AG04450 (cell line): ENCODE measurements at regions of chr5 and their contacts with region 1.

Region 1: DNA sequence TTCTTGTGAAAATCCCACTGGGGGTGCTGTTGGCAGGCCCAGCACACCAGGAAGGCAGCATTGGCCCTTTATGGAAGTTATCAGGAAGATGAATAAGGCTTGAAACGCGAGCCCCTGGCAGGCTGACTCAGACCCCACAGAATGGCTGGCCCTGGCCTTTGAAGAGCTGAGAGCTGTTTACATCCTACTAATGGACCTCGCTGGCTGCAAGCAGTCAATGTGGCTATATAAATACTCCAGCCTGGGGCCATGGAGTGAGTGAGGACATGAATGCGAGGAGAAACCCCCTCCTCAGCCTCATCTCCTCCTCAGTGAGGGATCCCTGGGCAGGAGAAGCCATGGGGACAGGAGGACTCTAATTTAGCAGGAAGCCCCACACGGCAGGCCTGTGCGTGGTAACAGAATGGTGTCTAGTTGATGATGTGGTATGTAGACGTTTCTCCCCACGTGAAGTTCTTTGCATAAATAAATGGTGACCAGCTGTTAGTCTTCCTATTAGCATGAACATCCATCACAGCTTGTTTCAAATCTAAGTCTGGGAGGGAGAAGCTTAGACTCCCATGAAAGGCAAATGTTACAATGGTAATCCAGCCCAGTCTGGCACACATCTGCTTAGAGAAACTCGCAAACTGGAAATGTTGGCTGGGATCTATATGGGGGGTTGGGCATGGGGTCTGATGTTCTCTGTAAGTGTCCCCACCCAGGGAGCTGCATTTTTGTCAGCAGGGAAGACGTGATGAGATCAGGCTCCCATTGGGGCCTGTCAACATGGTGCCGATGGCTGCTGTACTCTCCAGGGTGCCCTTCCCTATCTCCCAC is 175.1 kb upstream of the PITX1 start:
- DNase-seq: peak; percentile 97
- H3K4me3 ChIP-seq: peak overlapping the region; percentile 39
- H3K27ac ChIP-seq: peak overlapping the region; percentile 98
- H3K27me3 ChIP-seq: no peaks in the 10 kb centered on the region
- CTCF ChIP-seq: peak; percentile 49; the same call in 1 of the 2 replicates

Region 2: DNA sequence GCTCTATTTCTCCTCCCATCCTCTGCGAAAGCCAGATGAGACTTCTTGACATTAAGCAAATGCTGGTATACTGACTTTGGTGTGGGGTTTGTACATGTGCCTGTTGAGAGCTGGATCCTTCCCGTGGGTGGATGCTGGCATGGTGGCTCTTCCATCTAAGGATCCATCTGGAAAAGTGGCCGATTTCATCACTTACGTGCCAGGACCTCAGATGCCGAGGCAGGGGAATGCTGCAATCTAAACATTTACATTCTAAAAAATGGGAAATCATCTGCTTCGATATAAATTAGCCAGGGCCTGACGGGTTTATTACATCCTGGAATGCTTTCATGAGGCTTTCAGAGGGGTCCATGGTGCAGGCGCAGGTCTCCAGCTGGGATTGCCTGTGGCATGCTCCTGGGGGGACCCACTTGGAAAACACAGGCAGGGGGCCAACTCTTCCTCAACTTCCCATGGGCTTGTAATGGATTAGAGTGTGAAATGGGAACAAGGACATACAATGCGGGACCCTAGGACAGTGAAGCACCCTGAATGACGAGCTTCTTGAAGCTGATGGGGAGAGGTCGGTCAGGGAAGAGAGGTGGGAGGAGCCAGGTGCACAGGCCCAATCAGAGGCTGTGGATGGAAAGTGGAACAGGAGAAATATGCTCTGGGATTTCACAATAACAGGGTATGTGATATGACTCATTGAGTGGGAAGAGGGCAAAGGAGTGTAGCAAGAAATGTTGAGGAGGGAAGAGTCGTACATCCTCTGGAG is 69.6 kb before region 1 on chr5:
- CTCF ChIA-PET with region 1: interaction called, 3 read pairs
- POLR2A ChIA-PET with region 1: interaction called, 11 read pairs
- DNase-seq: peak; percentile 92
- H3K4me3 ChIP-seq: peak overlapping the region; percentile 43
- H3K27ac ChIP-seq: peak overlapping the region; percentile 97
- H3K27me3 ChIP-seq: no peaks in the 10 kb centered on the region
- CTCF ChIP-seq: no peak

Region 3: GRCh38 chr5:135191084-135191826 is 17.9 kb before region 1 on chr5:
- CTCF ChIA-PET with region 1: interaction called, 10 read pairs
- POLR2A ChIA-PET with region 1: interaction called, 9 read pairs
- DNase-seq: peak; percentile 44
- H3K4me3 ChIP-seq: peak overlapping the region; percentile 49
- H3K27ac ChIP-seq: no peak overlapping the region
- H3K27me3 ChIP-seq: no peaks in the 10 kb centered on the region
- CTCF ChIP-seq: peak; percentile 90

Region 4: GRCh38 chr5:135246923-135247795 is 38.0 kb after region 1 on chr5:
- CTCF ChIA-PET with region 1: interaction called, 4 read pairs
- POLR2A ChIA-PET with region 1: interaction called, 30 read pairs
- DNase-seq: peak; percentile 76
- H3K4me3 ChIP-seq: no peak overlapping the region
- H3K27ac ChIP-seq: peak overlapping the region; percentile 96
- H3K27me3 ChIP-seq: no peaks in the 10 kb centered on the region
- CTCF ChIP-seq: no peak

Region 5: DNA sequence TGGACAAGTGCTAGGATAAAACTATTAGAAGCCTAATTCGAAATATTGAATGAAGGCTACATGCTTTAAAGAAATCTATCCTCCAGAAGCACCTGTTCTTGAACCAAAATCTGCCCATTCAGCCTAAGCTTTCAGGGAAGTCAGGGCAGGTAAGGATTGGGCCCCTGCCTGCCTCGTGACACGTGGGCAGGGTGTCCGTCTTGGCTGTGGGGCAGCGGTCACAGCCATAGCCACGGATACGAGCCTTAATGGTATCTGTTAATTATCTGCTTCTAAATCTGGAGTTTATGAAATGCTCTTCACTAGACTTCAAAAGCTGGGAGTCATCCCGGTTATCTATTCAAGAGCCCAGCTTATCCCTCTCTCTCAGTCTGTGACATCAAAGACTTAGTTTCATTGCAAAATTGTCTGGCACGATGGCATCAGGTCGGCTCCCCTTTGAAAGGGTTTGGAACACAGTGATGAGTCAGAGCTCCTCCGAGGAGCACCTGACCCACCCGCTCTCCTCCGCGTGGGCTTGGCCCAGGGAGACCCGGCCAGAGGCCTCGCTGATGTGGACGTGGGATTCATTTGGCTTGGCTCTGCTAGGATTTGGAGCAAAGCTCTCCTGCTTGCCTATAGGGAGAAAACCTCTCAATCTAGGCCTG is 54.0 kb after region 1 on chr5:
- CTCF ChIA-PET with region 1: interaction called, 6 read pairs
- POLR2A ChIA-PET with region 1: interaction called, 55 read pairs
- DNase-seq: no peak
- H3K4me3 ChIP-seq: no peak overlapping the region
- H3K27ac ChIP-seq: no peak overlapping the region
- H3K27me3 ChIP-seq: no peaks in the 10 kb centered on the region
- CTCF ChIP-seq: no peak

Region 6: DNA sequence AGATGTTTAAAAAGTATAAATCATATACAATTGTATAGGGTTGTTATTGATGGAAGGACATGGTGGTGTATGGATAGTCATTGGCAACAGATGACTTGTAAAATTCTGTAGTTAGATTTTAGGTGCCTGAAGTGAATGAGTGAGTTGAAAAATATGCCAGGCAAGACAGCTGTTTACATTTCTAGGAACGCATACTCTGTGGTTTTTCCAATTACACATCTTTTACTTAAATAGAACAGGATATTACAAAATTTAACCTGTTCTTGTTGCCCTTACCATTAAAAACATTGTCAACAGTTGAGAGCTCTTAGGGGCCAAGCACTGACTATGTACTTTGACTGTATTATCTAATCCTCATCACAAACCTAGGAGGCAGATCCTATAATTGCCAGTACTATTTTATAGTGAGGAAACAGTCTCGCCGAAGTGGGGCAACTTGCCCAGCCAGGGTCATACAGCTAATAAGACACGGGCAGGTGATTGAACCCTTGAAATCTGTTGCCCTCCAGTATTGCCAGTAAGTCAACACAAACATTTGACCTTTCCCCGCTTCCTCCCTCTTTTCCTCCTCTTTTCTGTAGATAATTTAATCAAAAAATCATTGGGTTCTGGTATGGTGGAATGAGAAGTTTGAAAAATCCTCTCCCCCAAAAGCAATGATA is 101.3 kb after region 1 on chr5:
- CTCF ChIA-PET with region 1: interaction called, 4 read pairs
- POLR2A ChIA-PET with region 1: interaction called, 16 read pairs
- DNase-seq: peak; percentile 61
- H3K4me3 ChIP-seq: no peak overlapping the region
- H3K27ac ChIP-seq: no peak overlapping the region
- H3K27me3 ChIP-seq: no peaks in the 10 kb centered on the region
- CTCF ChIP-seq: no peak